ENCODE measurements at regions of chr14 and their contacts with region 1.

Region 1: DNA sequence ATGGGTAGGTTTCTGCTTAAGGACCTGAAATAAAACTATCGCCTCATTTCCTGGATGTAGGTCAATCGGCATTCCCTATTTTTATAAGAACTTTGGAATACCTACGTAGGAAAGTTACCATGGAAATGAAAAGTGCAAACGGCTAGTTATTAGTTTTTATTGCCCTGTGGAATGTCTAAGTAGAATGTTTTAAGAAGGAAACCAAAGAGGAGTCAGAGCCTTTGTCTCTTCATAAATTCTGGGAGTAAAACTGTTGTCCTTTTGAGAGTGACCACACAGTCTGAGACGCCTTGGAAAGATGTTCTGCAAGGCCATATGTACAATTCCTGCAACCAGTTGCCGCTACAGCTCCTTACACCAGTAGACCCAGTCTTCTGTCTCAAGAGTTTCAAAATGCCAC is 176.0 kb upstream of the SEL1L start:
- DNase-seq: no peak
- H3K4me3 ChIP-seq: no peak overlapping the region
- H3K27ac ChIP-seq: no peak overlapping the region
- H3K4me1 ChIP-seq: no peaks in the 10 kb centered on the region
- H3K27me3 ChIP-seq: no peaks in the 10 kb centered on the region
- CTCF ChIP-seq: no peak
- POLR2A ChIP-seq: no peak

Region 2: GRCh38 chr14:81989211-81989610 is 279.5 kb after region 1 on chr14:
- intact Hi-C with region 1: loop called in 1 of 2 experiments (anchors 5 kb)
- DNase-seq: no peak
- H3K4me3 ChIP-seq: no peak overlapping the region
- H3K27ac ChIP-seq: no peak overlapping the region
- H3K4me1 ChIP-seq: no peaks in the 10 kb centered on the region
- H3K27me3 ChIP-seq: no peaks in the 10 kb centered on the region
- CTCF ChIP-seq: no peak
- POLR2A ChIP-seq: no peak